Dorsolateral prefrontal cortex (tissue), 120 donors: ENCODE measurements at regions of chr2 and their contacts with region 1.

Region 1: GRCh38 chr2:19863303-19864041 is 38.3 kb downstream of the TTC32 start:
- DNase-seq: peak; percentile 57 to 84 (median 68)
- H3K4me3 ChIP-seq: peak overlapping the region in 45 of 59 donors; percentile 7 to 53 (median 34)
- H3K27ac ChIP-seq: no peak overlapping the region
- H3K27me3 ChIP-seq: peaks cover 0 to 12% (median under 1%) of the 10 kb centered on the region in 45 donors
- CTCF ChIP-seq: peak; percentile 86 to 99 (median 95)

Region 2: GRCh38 chr2:18387441-18388206 is 1475.8 kb before region 1 on chr2:
- intact Hi-C with region 1: loop called (anchors 5 to 10 kb)
- DNase-seq: peak; percentile 62 to 91 (median 76)
- H3K4me3 ChIP-seq: no peak overlapping the region
- H3K27ac ChIP-seq: peak overlapping the region in 3 of 59 donors; percentile 21 to 69 (median 65)
- H3K27me3 ChIP-seq: peaks cover 0 to 3% (median 0%) of the 10 kb centered on the region in 45 donors
- CTCF ChIP-seq: peak; percentile 87 to 99 (median 95)

Region 3: DNA sequence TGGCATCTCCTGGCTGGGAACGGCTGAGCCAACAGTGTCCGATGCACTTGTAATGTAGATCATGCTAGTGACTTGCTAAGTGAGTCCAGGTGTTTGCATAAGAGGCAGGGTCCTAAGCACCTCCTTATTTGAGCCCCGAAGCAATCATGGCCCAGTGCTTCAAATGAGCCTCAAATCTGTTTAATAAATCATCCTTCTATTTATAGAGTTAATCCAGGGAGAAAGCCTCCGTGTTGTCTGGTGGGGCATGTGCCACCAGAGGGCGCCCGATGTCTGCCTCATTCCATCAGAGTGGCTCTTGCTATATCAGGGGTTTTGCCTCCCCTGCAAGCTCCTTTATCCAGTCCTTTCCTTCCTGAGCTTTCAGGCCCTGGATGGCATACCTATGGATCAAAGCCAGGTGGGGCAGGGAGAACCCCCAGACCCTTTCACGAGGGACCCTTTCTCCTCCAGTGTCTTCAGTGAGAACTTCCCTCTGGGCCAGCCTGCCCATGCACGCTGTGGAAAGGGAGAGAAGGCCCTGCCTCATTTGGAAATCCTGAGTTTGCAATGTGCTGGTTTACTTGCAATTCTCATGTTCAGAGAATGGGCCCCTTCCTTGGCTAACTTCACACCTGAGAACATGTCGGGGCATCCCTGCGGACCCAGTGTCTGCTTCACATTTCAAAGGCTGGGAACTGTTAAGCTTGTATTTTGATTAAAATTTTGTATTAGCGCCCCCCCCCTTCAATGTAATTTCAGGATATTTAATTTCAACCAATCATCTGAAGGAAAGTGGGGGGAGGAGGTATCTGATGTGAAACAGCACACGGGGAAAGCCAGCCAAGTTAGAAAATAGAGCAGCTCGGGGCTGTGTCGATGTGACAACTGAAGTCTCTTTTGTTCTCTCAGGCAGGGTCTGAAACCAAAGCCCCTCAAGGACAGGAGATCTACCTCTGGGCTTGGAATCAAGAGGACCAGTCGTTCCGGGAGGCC is 1342.7 kb before region 1 on chr2:
- intact Hi-C with region 1: loop called (anchors 2 kb)
- DNase-seq: peak; percentile 70 to 90 (median 82)
- H3K4me3 ChIP-seq: peak overlapping the region in 19 of 59 donors; percentile 4 to 48 (median 19)
- H3K27ac ChIP-seq: peak overlapping the region in 1 of 59 donors; percentile 9
- H3K27me3 ChIP-seq: peaks cover 0 to 21% (median 0%) of the 10 kb centered on the region in 45 donors
- CTCF ChIP-seq: peak; percentile 75 to 95 (median 89)

Region 4: GRCh38 chr2:18749912-18750526 is 1113.5 kb before region 1 on chr2:
- intact Hi-C with region 1: loop called (anchors 2 to 5 kb)
- DNase-seq: peak in 6 of 10 donors; percentile 32 to 71 (median 42)
- H3K4me3 ChIP-seq: no peak overlapping the region
- H3K27ac ChIP-seq: no peak overlapping the region
- H3K27me3 ChIP-seq: no peaks in the 10 kb centered on the region
- CTCF ChIP-seq: peak; percentile 70 to 95 (median 85)

Region 5: DNA sequence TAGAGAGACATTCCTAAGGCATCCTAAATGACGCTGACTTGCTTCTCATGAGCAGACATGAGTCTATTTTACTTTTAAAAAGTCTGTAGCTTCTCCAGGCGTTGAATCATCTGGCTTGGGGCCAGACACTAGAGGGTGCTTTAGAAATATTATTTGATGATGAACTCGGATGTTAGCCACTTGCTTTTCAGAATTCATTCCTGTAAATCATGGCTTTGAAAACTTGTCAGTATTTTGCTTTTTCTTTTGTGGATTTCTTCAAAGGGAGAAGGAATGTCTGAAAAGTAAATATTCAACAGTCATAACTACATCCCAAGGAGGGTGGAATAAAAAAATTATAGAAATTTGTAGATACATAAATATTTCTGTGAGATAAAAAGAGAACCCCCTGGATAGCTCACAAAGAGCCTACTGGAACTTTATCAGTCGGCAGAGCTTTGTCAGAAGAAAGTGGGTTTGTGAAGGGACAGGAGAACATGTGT is 875.8 kb before region 1 on chr2:
- intact Hi-C with region 1: loop called in 1 of 2 experiments (anchors 10 kb)
- DNase-seq: peak in 7 of 10 donors; percentile 19 to 62 (median 40)
- H3K4me3 ChIP-seq: no peak overlapping the region
- H3K27ac ChIP-seq: no peak overlapping the region
- H3K27me3 ChIP-seq: no peaks in the 10 kb centered on the region
- CTCF ChIP-seq: peak in 50 of 56 donors; percentile 14 to 72 (median 43)